ENCODE measurements at regions of chr18 and their contacts with region 1.

Region 1: DNA sequence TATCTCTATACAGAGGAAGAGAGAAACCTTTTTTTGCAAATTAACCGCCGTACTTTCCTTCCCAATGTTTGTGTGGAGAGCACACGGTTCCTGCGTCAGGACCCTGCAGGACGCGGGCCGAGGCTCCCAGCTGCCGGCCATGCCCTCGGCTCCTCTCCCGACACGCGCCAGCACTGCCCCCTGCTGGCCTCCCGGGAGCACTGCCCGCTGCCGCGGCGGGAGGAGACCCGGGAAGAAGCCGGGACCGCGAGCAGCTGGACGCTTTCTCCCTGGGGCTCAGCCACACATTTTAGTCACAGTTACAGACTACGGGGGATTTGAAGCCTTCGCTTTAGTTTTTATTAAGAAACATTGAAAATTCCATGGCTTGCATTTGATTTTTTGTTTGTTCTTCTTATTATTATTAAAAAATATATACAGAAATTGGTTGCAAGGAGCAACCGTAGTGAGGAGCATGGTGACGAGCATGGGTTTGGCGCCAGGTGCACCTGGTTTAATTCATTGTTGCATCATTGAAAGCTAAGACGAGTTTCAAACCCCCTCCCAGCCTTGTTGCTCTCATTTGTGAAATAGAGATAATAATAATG is 401.2 kb downstream of the GALR1 start:
- DNase-seq: peak; percentile 68
- ATAC-seq: peak; percentile 79 to 98 (median 92)
- H3K4me3 ChIP-seq: no peak overlapping the region
- H3K4me3 Mint-ChIP-seq: no peak overlapping the region
- H3K27ac ChIP-seq: no peak overlapping the region
- H3K27ac Mint-ChIP-seq: no peak overlapping the region
- H3K4me1 ChIP-seq: peaks cover 5% of the 10 kb centered on the region
- H3K4me1 Mint-ChIP-seq: peaks cover 9 to 17% of the 10 kb centered on the region in 2 donors
- H3K27me3 ChIP-seq: peaks cover 5% of the 10 kb centered on the region
- H3K27me3 Mint-ChIP-seq: peaks cover 6 to 11% of the 10 kb centered on the region in 2 donors
- CTCF ChIP-seq: peak; percentile 96

Region 2: GRCh38 chr18:76803814-76804213 is 847.1 kb before region 1 on chr18:
- intact Hi-C with region 1: loop called (anchors 2 kb)
- DNase-seq: peak; percentile 46 to 85
- ATAC-seq: peak; percentile 64 to 70 (median 69)
- H3K4me3 ChIP-seq: no peak overlapping the region
- H3K4me3 Mint-ChIP-seq: no peak overlapping the region
- H3K27ac ChIP-seq: no peak overlapping the region
- H3K27ac Mint-ChIP-seq: peak overlapping the region in 1 of 2 donors; percentile 53
- H3K4me1 ChIP-seq: peaks cover 17% of the 10 kb centered on the region
- H3K4me1 Mint-ChIP-seq: peaks cover 6 to 17% of the 10 kb centered on the region in 2 donors
- H3K27me3 ChIP-seq: peaks cover 5% of the 10 kb centered on the region
- H3K27me3 Mint-ChIP-seq: peaks cover 0 to 4% of the 10 kb centered on the region in 2 donors
- CTCF ChIP-seq: peak; percentile 81

Region 3: GRCh38 chr18:76922107-76922506 is 728.8 kb before region 1 on chr18:
- intact Hi-C with region 1: loop called (anchors 1 kb)
- DNase-seq: peak; percentile 31 to 76
- ATAC-seq: peak; percentile 88 to 100 (median 99)
- H3K4me3 ChIP-seq: no peak overlapping the region
- H3K4me3 Mint-ChIP-seq: no peak overlapping the region
- H3K27ac ChIP-seq: no peak overlapping the region
- H3K27ac Mint-ChIP-seq: no peak overlapping the region
- H3K4me1 ChIP-seq: no peaks in the 10 kb centered on the region
- H3K4me1 Mint-ChIP-seq: peaks cover 8 to 15% of the 10 kb centered on the region in 2 donors
- H3K27me3 ChIP-seq: no peaks in the 10 kb centered on the region
- H3K27me3 Mint-ChIP-seq: no peaks in the 10 kb centered on the region
- CTCF ChIP-seq: peak; percentile 68

Region 4: DNA sequence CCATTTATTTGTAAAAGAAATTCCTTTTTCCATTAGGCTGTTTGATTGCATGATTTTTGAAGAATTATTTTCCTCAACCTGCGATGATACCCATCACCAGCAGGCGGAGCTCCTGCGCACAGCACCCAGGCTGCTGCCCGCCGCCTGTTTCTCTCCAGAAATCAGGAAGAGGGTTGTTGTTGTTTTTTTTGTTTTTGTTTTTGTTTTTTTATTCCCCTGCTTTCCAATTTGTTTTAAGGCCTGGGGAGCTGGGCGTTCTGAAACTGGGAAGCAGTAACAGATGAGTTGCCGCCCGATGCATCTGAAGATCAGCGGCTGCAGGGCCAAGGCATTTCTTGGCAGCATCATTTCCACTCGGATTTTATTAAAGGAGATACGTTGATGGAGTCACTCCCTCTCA is 650.4 kb before region 1 on chr18:
- intact Hi-C with region 1: loop called (anchors 5 kb)
- DNase-seq: peak; percentile 59 to 78
- ATAC-seq: peak in 2 of 3 donors; percentile 64 to 76
- H3K4me3 ChIP-seq: no peak overlapping the region
- H3K4me3 Mint-ChIP-seq: no peak overlapping the region
- H3K27ac ChIP-seq: no peak overlapping the region
- H3K27ac Mint-ChIP-seq: peak overlapping the region; percentile 29 to 46
- H3K4me1 ChIP-seq: peaks cover 29% of the 10 kb centered on the region
- H3K4me1 Mint-ChIP-seq: peaks cover 31 to 39% of the 10 kb centered on the region in 2 donors
- H3K27me3 ChIP-seq: no peaks in the 10 kb centered on the region
- H3K27me3 Mint-ChIP-seq: peaks cover 0 to 2% of the 10 kb centered on the region in 2 donors
- CTCF ChIP-seq: peak; percentile 99

Region 5: DNA sequence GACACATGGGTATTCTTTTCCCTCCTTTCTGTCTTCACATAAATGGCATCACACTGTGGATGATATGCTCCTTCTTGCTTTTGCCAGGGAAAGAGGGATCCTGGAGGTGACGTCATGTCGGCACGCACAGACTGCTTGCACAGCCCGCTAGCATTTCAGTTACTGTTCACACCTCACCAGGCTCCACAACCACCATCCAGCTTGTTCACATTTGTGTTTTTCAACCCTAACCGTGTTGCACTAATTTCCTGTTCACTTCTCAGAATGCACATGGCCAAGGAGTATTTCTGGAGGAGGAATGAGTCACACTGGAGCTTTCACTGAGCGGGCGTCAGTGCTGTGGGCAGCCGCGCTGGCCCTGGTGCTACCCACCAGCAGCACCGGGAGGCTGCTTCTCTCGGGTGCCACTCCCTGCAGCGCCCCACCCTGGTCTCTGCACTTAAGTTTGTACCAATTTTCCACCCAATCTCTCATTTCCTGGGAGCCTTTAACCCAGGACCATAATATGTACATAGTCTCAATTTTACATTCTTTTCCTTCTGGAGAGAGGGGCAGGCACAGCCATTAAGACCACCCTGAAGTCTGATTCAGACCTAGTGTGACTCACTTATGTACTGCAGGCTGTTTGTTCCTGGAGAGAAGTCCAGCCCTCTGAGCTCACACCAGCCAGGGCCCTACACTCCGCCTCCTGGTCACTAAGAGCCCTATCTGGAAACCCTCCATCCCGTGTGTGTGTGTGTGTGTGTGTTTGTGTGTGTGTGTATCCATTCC is 583.4 kb before region 1 on chr18:
- intact Hi-C with region 1: loop called (anchors 5 kb)
- DNase-seq: peak; percentile 74 to 84
- ATAC-seq: peak; percentile 45 to 73 (median 64)
- H3K4me3 ChIP-seq: no peak overlapping the region
- H3K4me3 Mint-ChIP-seq: peak overlapping the region; percentile 83
- H3K27ac ChIP-seq: peak overlapping the region; percentile 93
- H3K27ac Mint-ChIP-seq: peak overlapping the region; percentile 94 to 98
- H3K4me1 ChIP-seq: peaks cover 96% of the 10 kb centered on the region
- H3K4me1 Mint-ChIP-seq: peaks cover 100% of the 10 kb centered on the region in 2 donors
- H3K27me3 ChIP-seq: no peaks in the 10 kb centered on the region
- H3K27me3 Mint-ChIP-seq: no peaks in the 10 kb centered on the region
- CTCF ChIP-seq: no peak

Region 6: GRCh38 chr18:77101410-77102258 is 549.3 kb before region 1 on chr18:
- intact Hi-C with region 1: loop called (anchors 10 kb)
- DNase-seq: peak; percentile 56 to 69
- ATAC-seq: peak; percentile 35 to 61 (median 42)
- H3K4me3 ChIP-seq: peak overlapping the region; percentile 1
- H3K4me3 Mint-ChIP-seq: peak overlapping the region; percentile 79
- H3K27ac ChIP-seq: peak overlapping the region; percentile 92
- H3K27ac Mint-ChIP-seq: peak overlapping the region; percentile 87 to 94
- H3K4me1 ChIP-seq: peaks cover 91% of the 10 kb centered on the region
- H3K4me1 Mint-ChIP-seq: peaks cover 92 to 98% of the 10 kb centered on the region in 2 donors
- H3K27me3 ChIP-seq: no peaks in the 10 kb centered on the region
- H3K27me3 Mint-ChIP-seq: no peaks in the 10 kb centered on the region
- CTCF ChIP-seq: no peak

Region 7: DNA sequence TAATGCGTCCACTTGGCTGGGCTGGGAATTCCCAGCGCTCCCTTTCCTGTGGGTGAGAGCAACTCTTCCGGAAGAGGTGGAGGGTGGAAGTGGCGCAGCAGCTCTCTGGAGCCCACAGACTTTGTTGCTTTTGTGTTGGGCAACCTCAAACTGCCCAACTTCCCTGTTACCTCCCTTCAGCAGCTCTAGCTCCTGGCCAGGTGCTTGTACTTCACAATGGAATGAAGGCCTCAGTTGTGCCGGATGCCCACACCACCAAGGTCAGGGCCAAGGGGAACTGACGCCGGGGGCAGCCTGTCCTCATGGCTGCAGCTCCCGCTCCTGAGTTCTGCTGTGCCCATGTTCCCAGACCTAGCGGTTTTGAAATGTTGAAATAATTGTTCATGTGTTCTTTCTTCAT is 78.4 kb before region 1 on chr18:
- intact Hi-C with region 1: no loop called
- DNase-seq: no peak
- ATAC-seq: no peak
- H3K4me3 ChIP-seq: no peak overlapping the region
- H3K4me3 Mint-ChIP-seq: no peak overlapping the region
- H3K27ac ChIP-seq: no peak overlapping the region
- H3K27ac Mint-ChIP-seq: no peak overlapping the region
- H3K4me1 ChIP-seq: no peaks in the 10 kb centered on the region
- H3K4me1 Mint-ChIP-seq: no peaks in the 10 kb centered on the region
- H3K27me3 ChIP-seq: no peaks in the 10 kb centered on the region
- H3K27me3 Mint-ChIP-seq: peaks cover 24 to 50% of the 10 kb centered on the region in 2 donors
- CTCF ChIP-seq: no peak

Measured in natural killer cell (primary cell).